Caco-2 (cell line): ENCODE measurements at regions of chr16 and their contacts with region 1.

Region 1: DNA sequence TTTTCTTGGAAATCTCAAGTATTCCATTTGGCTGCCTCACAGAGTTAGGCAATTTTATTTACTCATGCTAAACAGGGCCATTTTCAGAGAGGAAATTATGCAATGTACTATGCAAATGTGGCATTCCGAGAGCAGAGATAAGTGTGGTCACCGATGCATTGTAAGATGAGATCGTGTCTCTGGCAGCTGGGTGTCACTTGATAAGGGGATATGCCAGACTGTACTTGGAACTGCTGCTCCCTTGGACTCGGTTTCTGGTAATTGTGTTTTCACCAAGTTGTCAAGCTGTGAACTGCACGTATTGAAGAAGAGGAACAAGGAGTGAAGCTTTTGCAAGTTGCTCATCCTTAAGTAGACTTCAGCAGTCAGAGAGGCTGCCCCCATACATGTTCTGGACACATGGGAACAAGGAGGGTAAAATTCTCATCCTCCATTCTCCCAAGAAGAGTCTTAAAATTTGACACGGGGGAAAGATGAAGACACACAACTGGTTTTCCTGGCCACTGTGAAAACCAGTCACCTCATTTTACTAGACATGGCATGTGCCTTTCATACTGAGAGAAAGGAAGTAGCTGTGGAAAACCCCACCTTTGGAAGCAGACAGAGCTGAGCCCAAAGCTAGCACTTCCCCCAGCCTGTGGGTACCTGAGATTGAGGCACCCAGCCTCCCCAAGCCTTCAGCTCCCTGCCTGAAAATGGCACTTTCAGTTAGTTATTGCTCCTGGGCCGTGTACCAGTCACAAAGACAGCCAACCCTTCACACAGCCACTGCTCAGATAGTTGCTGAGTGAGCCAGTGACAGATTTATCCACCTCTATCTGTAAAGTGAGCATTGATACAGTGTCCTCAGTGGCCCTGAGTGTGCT is 150.7 kb downstream of the SOCS1 start:
- DNase-seq: peak; percentile 53 to 59
- H3K4me3 ChIP-seq: no peak overlapping the region
- H3K4me3 Mint-ChIP-seq: no peak overlapping the region
- H3K27ac Mint-ChIP-seq: no peak overlapping the region
- H3K4me1 ChIP-seq: peaks cover 24% of the 10 kb centered on the region
- H3K4me1 Mint-ChIP-seq: peaks cover 13% of the 10 kb centered on the region
- H3K27me3 ChIP-seq: no peaks in the 10 kb centered on the region
- H3K27me3 Mint-ChIP-seq: no peaks in the 10 kb centered on the region
- CTCF ChIP-seq: no peak

Region 2: GRCh38 chr16:11133344-11133943 is 28.2 kb after region 1 on chr16:
- CTCF ChIA-PET with region 1: no interaction called
- POLR2A ChIA-PET with region 1: no interaction called
- intact Hi-C with region 1: loop called (anchors 2 kb)
- DNase-seq: peak; percentile 88 to 92
- H3K4me3 ChIP-seq: no peak overlapping the region
- H3K4me3 Mint-ChIP-seq: peak overlapping the region; percentile 62
- H3K27ac Mint-ChIP-seq: peak overlapping the region; percentile 66
- H3K4me1 ChIP-seq: peaks cover 33% of the 10 kb centered on the region
- H3K4me1 Mint-ChIP-seq: peaks cover 20% of the 10 kb centered on the region
- H3K27me3 ChIP-seq: no peaks in the 10 kb centered on the region
- H3K27me3 Mint-ChIP-seq: no peaks in the 10 kb centered on the region
- CTCF ChIP-seq: no peak

Region 3: DNA sequence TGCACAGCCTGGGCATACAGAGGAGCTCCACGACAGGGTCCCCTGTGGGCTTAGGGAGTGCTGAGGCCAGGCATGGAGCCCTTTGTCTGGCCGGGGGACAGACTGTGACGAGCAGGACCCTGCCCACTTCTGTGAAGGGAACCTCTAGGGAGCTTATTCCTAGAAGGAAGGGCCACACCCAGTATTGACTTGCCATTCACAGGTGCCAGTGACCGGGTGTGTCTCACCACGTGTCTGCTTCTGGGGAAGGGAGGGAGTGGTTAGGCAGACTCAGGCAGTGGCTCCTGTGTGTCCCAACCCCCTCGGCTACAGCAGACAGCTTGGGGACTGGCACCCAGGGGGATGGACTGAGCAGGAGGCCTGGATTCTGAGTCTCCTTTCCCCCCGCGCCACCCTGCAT is 93.5 kb after region 1 on chr16:
- CTCF ChIA-PET with region 1: no interaction called
- POLR2A ChIA-PET with region 1: no interaction called
- intact Hi-C with region 1: no loop called
- DNase-seq: no peak
- H3K4me3 ChIP-seq: no peak overlapping the region
- H3K4me3 Mint-ChIP-seq: no peak overlapping the region
- H3K27ac Mint-ChIP-seq: no peak overlapping the region
- H3K4me1 ChIP-seq: no peaks in the 10 kb centered on the region
- H3K4me1 Mint-ChIP-seq: peaks cover 10% of the 10 kb centered on the region
- H3K27me3 ChIP-seq: no peaks in the 10 kb centered on the region
- H3K27me3 Mint-ChIP-seq: no peaks in the 10 kb centered on the region
- CTCF ChIP-seq: no peak